ENCODE measurements at regions of chr11 and their contacts with region 1.

Region 1: DNA sequence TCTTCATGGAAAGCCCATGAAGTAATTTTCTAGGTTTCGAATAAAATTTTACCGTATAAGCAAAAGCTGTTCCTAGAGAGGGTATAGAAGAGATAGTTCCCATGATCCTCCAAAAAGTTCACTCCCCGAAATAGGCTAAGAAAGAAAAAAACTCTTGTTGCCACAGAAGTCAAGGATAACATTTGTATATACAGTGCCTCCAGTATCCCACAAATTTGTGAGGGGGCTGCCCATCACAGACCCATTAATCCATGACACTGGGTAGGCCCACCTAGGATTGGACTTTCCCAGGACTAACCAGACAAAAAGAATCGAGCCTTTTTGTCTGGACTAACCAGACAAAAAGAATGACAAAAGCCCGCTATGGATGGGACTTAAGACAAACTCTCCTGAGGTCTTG is 233.0 kb downstream of the DDX10 start:
- DNase-seq: no peak
- H3K4me3 ChIP-seq: no peak overlapping the region
- H3K27ac ChIP-seq: no peak overlapping the region
- H3K4me1 ChIP-seq: peaks cover 36% of the 10 kb centered on the region
- H3K27me3 ChIP-seq: no peaks in the 10 kb centered on the region
- CTCF ChIP-seq: no peak

Region 2: GRCh38 chr11:108887436-108888238 is 10.3 kb before region 1 on chr11:
- CTCF ChIA-PET with region 1: interaction called, 21 read pairs
- POLR2A ChIA-PET with region 1: no interaction called
- intact Hi-C with region 1: no loop called
- DNase-seq: no peak
- H3K4me3 ChIP-seq: no peak overlapping the region
- H3K27ac ChIP-seq: no peak overlapping the region
- H3K4me1 ChIP-seq: no peaks in the 10 kb centered on the region
- H3K27me3 ChIP-seq: no peaks in the 10 kb centered on the region
- CTCF ChIP-seq: no peak

Region 3: DNA sequence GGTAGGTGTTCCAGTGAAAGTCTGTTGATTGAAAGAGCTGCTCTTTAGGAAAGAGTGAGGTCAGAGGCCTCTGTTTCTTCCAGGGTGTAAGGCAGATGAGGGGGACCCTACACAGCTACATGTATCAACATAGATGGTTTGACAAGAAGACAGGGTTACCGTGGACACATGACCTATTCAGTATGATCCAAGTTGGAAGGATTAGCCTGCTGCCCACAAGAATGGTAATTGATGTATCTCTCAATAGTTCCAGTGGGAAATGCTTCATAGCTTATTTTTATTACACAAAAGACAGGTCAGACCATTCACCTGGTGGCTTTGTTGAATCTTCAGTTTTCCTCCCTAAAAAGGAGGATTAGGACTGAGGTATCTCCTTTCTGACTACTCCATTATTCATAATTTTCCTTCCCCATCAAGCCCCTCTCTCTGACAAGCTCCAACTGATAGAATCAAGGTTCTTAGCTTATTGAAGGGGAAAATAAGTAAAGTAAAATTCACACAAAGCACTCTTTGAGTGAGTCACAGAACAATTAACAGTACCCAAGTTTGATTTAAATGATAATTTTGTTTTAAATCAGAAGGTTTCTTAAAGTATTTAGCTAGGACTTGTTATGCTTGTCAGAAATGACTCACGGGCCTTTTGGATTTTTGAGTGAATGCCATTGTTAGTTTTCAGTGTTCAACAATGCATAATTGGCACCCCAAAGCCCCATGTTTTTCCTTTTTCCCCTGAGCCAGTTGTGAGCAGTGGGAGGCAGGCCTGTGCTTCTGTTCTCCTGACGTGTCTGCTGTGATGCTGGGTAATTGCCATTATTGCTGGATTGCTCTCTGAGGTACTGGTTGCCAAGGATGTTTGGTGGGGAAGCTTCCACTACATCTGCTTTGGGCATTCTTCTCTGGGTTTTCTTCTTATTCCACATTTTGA is 140.2 kb after region 1 on chr11:
- CTCF ChIA-PET with region 1: no interaction called
- POLR2A ChIA-PET with region 1: no interaction called
- intact Hi-C with region 1: no loop called
- DNase-seq: no peak
- H3K4me3 ChIP-seq: no peak overlapping the region
- H3K27ac ChIP-seq: no peak overlapping the region
- H3K4me1 ChIP-seq: no peaks in the 10 kb centered on the region
- H3K27me3 ChIP-seq: no peaks in the 10 kb centered on the region
- CTCF ChIP-seq: no peak

Region 4: DNA sequence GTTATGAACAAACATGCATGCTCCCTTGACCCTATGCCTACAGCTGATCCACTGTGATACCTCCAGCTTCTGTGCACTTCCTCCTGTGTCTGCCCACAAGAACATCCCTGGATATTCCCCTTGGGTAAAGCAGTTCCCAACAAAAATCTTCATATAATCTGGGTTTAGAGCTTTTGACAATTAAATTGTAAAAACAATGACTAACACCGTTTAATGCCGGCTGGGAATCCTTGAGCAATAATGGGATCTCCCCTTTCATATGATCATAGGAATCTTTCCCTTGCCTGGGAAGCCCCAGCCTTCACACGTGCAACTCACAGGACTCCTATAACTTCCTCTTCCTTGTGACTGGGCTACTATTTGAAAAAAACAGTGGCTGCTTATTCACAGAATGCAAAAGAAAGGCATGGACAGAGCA is 1189.0 kb after region 1 on chr11:
- CTCF ChIA-PET with region 1: no interaction called
- POLR2A ChIA-PET with region 1: no interaction called
- intact Hi-C with region 1: no loop called
- DNase-seq: peak in 1 of 2 experiments; percentile 72
- H3K4me3 ChIP-seq: no peak overlapping the region
- H3K27ac ChIP-seq: no peak overlapping the region; the same call in 1 of the 2 replicates
- H3K4me1 ChIP-seq: peaks cover 27% of the 10 kb centered on the region
- H3K27me3 ChIP-seq: no peaks in the 10 kb centered on the region
- CTCF ChIP-seq: no peak

Measured in PC-9 (cell line).